IMR-90 (cell line): ENCODE measurements at regions of chr16 and their contacts with region 1.

Region 1: DNA sequence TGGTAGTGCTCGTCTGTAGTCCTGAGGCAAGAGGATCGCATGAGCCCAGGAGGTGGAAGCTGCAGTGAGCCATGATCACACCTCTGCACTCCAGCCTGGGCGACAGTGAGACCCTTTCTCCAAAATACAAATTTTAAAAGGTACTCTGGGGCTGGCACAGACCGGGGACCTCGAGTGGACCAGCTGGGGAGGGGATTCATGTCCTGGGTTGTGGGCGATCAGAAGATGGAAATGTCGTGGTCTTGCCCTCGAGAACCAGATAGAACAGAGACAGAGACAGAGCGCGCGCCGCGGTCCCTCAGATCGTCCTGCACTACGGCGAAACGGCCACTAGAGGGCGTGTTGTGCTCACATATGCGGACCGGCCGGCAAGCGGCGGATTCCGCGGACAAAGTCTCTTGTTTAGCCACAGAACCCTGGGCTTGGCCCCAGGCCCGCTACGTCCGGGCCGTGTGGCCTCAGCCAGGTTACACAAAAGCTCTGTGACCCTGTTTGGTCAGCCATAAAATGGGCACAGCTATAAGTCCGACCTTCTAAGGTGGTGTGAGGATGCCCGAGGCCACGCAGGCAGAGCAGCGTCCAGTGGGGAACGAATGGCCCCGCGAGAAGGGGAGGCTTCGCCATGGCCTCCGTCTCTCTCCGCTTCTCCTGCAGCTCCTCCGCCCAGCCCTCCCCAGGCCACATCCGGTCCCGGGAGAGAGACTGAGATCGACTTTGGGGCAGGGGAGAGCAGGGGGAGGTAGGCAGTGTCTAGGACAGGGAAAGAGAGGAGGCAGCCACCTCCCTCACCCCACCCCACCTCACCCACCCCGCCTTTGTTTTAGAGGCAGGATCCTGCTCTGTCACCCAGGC is 14.6 kb upstream of the SBK1 start:
- DNase-seq: peak; percentile 63
- ATAC-seq: peak; percentile 97
- H3K4me3 ChIP-seq: peak overlapping the region; percentile 50
- H3K27ac ChIP-seq: no peak overlapping the region; the same call in 1 of the 2 replicates
- H3K4me1 ChIP-seq: no peaks in the 10 kb centered on the region
- H3K27me3 ChIP-seq: peaks cover 26% of the 10 kb centered on the region; the same call in 1 of the 2 replicates
- CTCF ChIP-seq: peak; percentile 94
- POLR2A ChIP-seq: 0 out of 2 replicates have a peak, but pooled peaks have one; percentile 26
- RAD21 ChIP-seq: peak; percentile 94

Region 2: DNA sequence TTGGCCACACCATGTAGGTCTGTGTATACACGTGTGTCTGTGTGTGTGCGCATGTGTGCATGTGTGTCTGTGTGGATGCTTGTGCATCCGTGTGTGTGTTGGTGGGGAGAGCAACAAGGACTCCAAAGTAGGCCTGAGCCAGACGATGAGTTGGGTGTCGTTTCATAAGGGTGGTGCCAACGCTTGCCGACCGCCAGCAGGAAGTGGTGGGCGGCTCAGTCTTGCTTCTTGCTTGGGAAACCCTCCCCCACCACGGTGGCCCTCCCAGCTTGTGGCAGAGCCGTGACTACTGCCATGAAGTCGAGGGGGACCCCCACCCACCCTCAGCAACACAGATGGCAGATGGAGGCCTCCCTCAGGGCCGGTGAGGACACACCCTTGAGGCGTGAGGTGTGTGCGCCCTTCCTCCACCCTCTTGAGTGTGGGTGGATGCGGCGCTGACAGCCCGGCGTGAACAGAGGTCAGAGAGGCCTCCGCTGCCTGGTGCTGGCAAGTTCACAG is 32.1 kb after region 1 on chr16:
- CTCF ChIA-PET with region 1: no interaction called
- POLR2A ChIA-PET with region 1: interaction called, 8 read pairs
- dilution Hi-C with region 1: no loop called
- in situ Hi-C with region 1: loop called (anchors 5 kb)
- intact Hi-C with region 1: no loop called
- DNase-seq: no peak
- ATAC-seq: no peak
- H3K4me3 ChIP-seq: no peak overlapping the region
- H3K27ac ChIP-seq: no peak overlapping the region
- H3K4me1 ChIP-seq: no peaks in the 10 kb centered on the region
- H3K27me3 ChIP-seq: peaks cover 6% of the 10 kb centered on the region
- CTCF ChIP-seq: no peak
- POLR2A ChIP-seq: no peak
- RAD21 ChIP-seq: no peak

Region 3: DNA sequence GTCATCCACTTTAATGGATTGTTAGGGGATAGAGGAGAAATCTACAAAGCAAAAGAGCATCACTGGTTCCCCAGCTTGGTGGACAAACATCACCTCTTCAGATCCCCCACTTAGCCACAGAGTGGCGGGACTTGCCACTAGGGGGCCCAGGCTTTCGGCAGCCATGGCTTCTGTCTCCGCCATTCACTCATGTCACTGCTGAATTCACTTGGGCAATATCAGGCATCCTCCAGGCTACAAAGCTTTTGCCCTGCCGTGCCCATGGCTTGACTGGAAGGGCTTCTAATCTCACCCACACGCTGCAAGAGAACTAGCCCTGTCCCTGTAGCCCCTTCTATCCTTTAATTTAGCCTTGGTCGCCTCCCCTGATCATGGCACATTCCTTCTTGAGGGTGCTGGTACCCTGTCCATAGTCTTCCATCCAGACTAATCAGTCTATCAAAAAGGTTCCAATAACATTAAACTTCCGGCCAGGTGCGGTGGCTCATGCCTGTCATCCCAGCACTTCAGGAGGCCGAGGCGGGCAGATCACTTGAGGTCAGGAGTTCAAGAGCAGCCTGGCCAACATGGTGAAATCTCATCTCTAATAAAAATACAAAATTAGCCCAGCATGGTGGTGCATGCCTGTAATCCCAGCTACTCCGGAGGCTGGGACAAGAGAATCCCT is 49.3 kb after region 1 on chr16:
- CTCF ChIA-PET with region 1: no interaction called
- POLR2A ChIA-PET with region 1: no interaction called
- dilution Hi-C with region 1: no loop called
- in situ Hi-C with region 1: loop called (anchors 10 kb)
- intact Hi-C with region 1: no loop called
- DNase-seq: peak; percentile 34
- ATAC-seq: peak; percentile 87
- H3K4me3 ChIP-seq: no peak overlapping the region
- H3K27ac ChIP-seq: no peak overlapping the region
- H3K4me1 ChIP-seq: no peaks in the 10 kb centered on the region
- H3K27me3 ChIP-seq: no peaks in the 10 kb centered on the region; the same call in 1 of the 2 replicates
- CTCF ChIP-seq: peak; percentile 70
- POLR2A ChIP-seq: no peak
- RAD21 ChIP-seq: peak; percentile 57

Region 4: GRCh38 chr16:28609631-28610594 is 332.1 kb after region 1 on chr16 and contains the start of gene SULT1A1:
- CTCF ChIA-PET with region 1: no interaction called
- POLR2A ChIA-PET with region 1: no interaction called
- dilution Hi-C with region 1: no loop called
- in situ Hi-C with region 1: loop called (anchors 10 kb)
- intact Hi-C with region 1: loop called (anchors 5 kb)
- DNase-seq: no peak
- ATAC-seq: peak; percentile 30; the same call in 1 of the 2 replicates
- H3K4me3 ChIP-seq: no peak within 1 kb of the TSS
- H3K27ac ChIP-seq: no peak within 1 kb of the TSS
- H3K4me1 ChIP-seq: no peaks in the 10 kb centered on the region; the same call in 1 of the 2 replicates
- H3K27me3 ChIP-seq: peaks cover 28% of the 10 kb centered on the region
- CTCF ChIP-seq: no peak
- POLR2A ChIP-seq: no peak
- RAD21 ChIP-seq: no peak
- total RNA-seq, gene SULT1A1: 1.1 and 1.6 TPM in 2 replicates

Region 5: GRCh38 chr16:28863929-28864793 is 586.4 kb after region 1 on chr16:
- CTCF ChIA-PET with region 1: no interaction called
- POLR2A ChIA-PET with region 1: interaction called, 11 read pairs
- dilution Hi-C with region 1: no loop called
- in situ Hi-C with region 1: no loop called
- intact Hi-C with region 1: no loop called
- DNase-seq: peak; percentile 55
- ATAC-seq: peak; percentile 3
- H3K4me3 ChIP-seq: peak overlapping the region; percentile 93
- H3K27ac ChIP-seq: peak overlapping the region; percentile 95
- H3K4me1 ChIP-seq: peaks cover 5% of the 10 kb centered on the region; the same call in 1 of the 2 replicates
- H3K27me3 ChIP-seq: no peaks in the 10 kb centered on the region
- CTCF ChIP-seq: no peak
- POLR2A ChIP-seq: no peak
- RAD21 ChIP-seq: no peak